ENCODE measurements at regions of chr2 and their contacts with region 1.

Region 1: DNA sequence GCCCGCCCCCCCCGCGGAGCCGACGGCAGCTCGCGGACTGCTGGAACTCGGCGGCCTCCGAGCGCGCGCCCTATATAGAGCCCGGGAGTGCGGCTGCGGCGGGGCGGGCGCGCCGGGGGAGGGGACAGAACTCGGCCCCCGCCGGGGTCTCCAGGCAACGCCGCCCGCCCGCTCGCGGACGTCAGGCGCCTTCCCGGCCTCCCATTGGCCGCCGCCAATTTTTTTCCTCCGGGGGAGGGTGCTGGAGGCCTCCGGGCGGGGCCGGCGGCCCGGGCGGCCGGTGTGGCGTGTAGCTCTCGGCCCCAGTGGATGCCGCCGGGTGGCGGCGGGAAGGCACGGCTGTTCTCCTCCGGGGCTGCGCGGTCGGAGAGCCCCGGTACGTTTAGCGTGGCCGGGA is at the start of gene ZFP36L2:
- DNase-seq: no peak
- H3K4me3 ChIP-seq: peak within 1 kb of the TSS; percentile 86
- CTCF ChIP-seq: peak; percentile 2

Region 2: GRCh38 chr2:42770288-42771131 is 456.0 kb before region 1 on chr2:
- CTCF ChIA-PET with region 1: no interaction called
- POLR2A ChIA-PET with region 1: no interaction called
- DNase-seq: no peak
- H3K4me3 ChIP-seq: no peak overlapping the region
- CTCF ChIP-seq: peak; percentile 40

Region 3: DNA sequence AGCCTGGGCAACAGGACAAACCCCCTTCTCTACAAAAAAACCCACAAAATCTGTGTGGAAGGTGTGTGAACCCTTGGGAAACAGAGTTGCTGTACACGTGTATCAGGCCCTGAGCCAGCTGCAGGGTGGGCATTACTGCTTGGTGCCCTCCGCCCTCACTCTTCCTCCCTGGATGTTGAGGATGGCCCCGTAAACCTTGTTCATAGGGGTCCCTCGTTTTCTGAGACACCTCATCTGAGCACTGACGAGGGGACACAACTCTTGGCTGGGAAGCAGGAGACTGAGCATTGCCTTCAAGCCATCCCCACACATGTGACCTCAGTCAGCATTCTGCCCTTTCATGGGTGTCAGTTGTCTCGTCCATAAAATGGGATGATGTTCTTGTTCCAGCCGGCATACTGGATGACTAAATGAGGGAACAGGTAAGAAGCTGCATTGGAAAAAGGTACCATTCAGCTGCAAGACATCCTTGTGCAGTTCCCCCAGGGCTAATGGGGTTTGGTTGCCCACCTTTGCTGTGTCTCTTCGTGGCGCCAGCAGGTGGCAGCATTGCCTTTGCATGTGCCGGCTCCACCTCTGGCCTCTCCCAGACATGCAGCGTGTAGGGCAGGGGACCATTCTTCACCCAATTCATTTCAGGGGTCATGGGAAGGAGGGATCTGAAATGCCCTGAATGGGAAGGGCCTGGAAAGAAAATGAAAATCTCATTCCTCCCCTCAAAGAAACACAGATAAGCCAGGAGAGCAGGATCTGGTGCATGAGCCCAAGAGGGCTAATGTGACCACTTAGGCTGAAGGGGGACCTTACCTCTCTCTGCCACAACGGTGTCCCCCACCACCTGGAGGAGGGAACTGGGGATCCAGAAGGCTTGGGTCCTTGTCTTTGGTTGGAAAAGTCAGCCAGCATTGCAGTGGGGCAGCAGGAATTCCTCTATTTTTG is 397.8 kb before region 1 on chr2:
- CTCF ChIA-PET with region 1: interaction called, 111 read pairs
- POLR2A ChIA-PET with region 1: no interaction called
- DNase-seq: no peak
- H3K4me3 ChIP-seq: no peak overlapping the region
- CTCF ChIP-seq: peak; percentile 88

Region 4: DNA sequence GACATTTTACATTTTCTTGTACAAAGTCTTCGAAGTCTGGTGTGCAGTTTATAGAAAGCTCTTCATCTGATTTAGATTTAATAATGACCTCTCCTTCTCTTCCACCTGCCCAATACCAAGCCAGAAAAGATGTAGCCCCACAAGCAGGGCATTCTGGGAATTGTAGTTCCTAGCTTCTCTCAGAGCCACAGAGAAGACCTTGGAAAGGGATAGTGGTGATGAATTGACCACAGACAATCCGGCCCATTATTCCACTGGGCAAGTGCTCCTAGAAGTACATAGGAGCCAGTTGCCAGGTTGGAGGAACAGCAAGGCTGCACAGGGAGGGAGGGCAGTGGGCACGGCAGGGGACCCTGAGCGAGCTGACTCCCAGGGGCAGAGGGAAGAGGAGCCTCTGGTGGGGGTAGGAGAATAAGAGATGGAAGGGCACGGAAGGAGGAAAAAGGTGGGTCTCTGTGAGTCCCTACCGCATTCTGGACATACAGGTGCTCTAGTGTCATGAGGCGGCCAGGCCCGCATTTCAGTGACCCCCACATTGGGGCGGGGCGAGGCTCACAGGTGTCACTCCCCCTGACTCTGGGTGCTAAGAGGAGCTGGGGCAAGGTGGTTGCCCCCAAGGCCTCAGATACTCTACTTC is 281.7 kb before region 1 on chr2:
- CTCF ChIA-PET with region 1: interaction called, 293 read pairs
- POLR2A ChIA-PET with region 1: interaction called, 5 read pairs
- DNase-seq: no peak
- H3K4me3 ChIP-seq: no peak overlapping the region
- CTCF ChIP-seq: no peak

Region 5: GRCh38 chr2:42974721-42975717 is 251.5 kb before region 1 on chr2:
- CTCF ChIA-PET with region 1: interaction called, 248 read pairs
- POLR2A ChIA-PET with region 1: interaction called, 16 read pairs
- DNase-seq: no peak
- H3K4me3 ChIP-seq: peak overlapping the region; percentile 48
- CTCF ChIP-seq: peak; percentile 99

Region 6: DNA sequence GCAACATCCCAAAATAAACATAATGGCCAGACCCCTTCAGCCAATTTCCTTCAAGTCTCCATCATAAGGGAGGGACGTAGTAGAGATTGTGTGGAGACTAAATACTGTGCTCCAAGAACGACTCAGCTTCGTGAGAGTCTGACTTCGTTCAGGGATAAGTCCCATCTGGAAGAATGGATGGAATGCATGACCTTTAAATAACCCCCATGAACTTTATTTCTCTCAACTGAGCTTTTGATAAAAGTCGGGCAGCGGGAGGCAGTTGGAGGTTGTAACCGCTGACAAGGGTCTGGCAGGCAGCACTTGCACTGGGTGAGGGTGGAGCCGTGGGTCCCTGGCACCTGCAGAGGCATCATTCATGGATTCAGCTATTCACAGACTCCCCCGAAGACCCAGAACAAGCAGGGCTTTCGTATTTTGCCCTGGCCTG is 116.1 kb before region 1 on chr2:
- CTCF ChIA-PET with region 1: no interaction called
- POLR2A ChIA-PET with region 1: no interaction called
- DNase-seq: peak; percentile 55
- H3K4me3 ChIP-seq: no peak overlapping the region
- CTCF ChIP-seq: no peak

Region 7: DNA sequence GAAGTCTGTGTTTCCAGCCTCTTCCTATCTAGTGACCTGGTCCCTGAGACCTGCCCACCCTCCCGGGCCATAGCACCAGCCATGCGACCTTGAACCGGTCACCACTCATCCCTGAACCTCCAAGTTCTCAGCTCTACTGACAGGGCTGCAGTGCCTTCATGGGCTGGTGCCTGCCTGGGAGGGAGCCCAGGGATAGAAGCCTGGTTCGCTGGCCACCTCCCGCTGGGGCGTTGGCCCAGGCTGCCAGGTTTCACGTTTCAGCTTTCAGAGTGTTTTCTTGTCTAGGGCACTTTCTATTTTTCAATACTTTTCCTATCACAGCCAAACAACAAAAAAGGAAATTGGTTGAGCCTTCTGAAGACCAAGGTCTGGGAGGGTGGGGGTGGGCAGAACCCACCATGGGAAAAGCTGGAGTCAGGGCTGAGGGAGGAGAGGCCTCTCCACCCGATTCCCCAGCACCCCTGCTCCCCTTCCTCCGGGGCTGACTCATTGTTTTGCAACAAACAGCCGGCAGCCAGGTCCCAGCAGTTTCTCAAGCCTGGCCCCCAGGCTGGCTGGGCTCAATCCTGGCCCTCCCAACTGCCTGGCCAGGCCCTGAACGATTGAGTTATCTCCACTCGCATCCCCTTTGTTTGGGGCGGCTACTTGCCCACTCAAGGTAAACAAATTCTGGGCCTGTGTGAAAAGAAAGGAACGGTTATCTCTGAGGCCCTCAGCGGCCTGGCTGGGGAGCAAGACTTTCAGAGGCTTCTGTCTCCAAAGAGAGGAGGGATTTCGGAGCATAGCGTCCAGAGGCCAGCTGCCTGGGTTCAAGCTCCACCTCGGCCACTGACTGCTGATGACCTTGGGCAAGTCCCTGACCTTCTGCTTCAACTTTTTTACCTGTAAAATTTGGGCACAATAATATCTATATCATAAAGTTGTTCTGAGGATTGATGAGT is 47.7 kb before region 1 on chr2:
- CTCF ChIA-PET with region 1: no interaction called
- POLR2A ChIA-PET with region 1: no interaction called
- DNase-seq: no peak
- H3K4me3 ChIP-seq: no peak overlapping the region
- CTCF ChIP-seq: no peak

Region 8: DNA sequence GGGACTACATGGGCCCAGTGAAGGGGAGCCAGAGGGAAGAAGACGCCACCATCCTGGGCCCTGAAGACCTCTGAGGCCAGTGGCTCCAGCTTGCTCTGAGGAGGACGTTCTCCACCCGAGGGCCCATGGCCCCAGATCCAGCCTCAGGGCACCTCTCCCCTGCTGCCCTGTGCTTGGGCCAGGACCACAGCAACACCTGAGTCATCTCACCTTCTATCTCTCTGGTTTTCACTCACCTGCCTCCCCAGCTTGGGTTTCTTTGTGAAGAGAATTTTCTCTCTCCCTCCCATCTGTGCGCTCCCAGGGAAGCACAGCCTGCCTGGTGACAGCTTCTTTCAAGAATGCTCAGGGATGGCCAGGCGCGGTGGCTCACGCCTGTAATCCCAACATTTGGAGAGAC is 20.0 kb before region 1 on chr2:
- CTCF ChIA-PET with region 1: no interaction called
- POLR2A ChIA-PET with region 1: no interaction called
- DNase-seq: no peak
- H3K4me3 ChIP-seq: no peak overlapping the region
- CTCF ChIP-seq: no peak

Region 9: DNA sequence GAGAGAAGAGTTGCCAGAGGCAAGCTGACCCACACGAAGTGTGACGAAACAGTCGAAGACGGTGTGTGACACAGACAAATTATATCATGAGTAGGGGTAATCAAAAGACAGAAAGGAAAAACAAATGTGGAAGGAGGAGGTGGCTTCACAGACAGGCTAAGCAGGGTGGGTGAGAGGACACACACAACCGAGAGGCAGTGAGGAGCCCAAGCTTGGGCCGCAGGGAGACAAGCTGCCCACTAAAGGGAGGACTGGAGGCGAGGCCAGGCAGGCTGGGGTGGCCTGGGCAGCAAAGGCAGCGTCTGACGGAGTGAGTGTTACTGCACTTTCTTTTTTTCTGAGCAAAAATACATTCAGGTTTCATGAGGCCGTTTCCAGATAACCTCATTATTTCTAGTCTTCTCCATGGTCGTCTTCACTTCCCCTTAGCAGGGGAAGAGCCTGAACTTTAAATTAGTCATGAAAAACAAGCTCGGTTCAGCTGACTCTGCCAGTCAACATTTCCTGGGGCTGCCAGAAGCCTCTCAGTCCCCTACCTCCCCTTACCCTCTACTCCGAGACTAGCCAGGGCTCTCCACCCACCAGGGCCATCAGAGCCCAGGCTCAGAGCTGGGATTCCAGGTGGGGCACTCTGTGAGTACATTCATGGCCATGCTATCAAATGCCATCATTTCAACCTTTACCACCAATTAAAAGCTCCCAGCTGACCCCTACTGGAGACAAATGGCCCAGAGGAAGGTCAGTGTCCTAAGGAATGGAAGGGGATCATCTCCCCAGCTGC is 13.6 kb after region 1 on chr2:
- CTCF ChIA-PET with region 1: interaction called, 37 read pairs
- POLR2A ChIA-PET with region 1: interaction called, 3 read pairs
- DNase-seq: no peak
- H3K4me3 ChIP-seq: no peak overlapping the region
- CTCF ChIP-seq: no peak

Region 10: DNA sequence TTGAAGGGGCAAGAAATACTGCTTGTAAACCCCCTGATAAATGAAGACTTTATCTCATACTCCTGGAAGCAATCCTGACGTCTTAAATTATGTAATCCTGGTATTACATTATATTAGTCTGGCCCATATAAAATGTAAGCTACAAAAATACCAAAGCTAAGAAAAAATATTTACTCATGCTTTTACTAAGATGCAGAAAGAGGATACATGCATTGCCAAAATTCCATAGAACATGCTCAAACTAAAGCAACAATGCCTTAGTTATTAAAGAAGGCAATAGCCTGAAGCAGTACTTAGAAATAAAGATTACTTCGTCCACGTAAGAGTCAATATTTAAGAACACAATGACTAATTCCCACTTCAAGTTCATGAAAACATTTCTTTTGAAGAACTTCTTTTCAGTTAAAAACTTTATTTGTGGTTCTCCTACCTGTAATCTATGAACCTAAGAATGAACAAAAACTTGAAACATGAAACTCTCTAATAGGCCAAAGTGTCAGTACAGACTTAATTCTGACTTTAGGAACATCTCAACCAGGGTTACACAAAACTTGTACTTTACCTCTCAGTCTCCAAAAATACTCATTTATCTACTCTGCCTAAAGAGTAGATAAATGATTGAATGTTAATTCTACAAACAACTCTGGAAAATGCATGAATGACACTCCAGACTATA is 252.0 kb after region 1 on chr2:
- CTCF ChIA-PET with region 1: interaction called, 92 read pairs
- POLR2A ChIA-PET with region 1: interaction called, 7 read pairs
- DNase-seq: peak; percentile 45
- H3K4me3 ChIP-seq: no peak overlapping the region
- CTCF ChIP-seq: no peak

Measured in AG04449 (cell line).